WTC11 (cell line): ENCODE measurements at regions of chr1 and their contacts with region 1.

Region 1: DNA sequence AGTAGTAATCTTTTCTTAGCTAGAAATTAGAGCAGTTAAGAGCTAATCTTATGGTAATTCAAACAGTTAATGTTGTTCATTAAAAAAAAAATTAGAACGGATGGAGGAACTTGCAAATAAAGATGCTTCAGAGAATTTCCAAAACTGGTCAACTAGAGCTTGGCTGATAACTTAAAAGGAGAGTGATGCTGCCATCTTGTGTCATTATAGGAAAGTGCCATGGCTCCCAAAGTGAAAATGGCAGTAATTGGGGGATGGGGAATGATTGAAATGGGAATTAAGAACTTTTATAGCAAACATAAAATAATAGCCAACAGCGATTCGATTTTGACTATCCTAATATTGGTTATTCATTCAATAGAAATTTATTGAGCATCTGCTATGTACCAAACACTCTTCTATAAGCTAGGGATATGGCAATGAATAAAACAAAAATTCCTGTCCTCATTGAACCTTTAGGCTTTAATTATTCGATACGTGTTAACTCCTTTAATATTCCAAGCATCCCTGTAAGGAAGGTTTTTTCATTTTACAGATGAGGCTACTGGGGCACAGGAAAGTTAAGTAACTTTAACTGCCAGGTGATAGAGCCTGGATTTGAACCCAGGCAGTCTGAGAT is 5.7 kb upstream of the PLPP3 start:
- DNase-seq: no peak
- ATAC-seq: peak; percentile 35; the same call in 1 of the 2 replicates
- H3K4me3 Mint-ChIP-seq: no peak overlapping the region
- H3K27ac Mint-ChIP-seq: no peak overlapping the region
- H3K4me1 Mint-ChIP-seq: peaks cover 30% of the 10 kb centered on the region
- H3K27me3 Mint-ChIP-seq: no peaks in the 10 kb centered on the region
- CTCF ChIP-seq: peak; percentile 55

Region 2: GRCh38 chr1:55478742-55479141 is 1106.3 kb before region 1 on chr1:
- CTCF ChIA-PET with region 1: interaction called, 12 read pairs
- POLR2A ChIA-PET with region 1: no interaction called
- DNase-seq: no peak
- ATAC-seq: no peak; the same call in 1 of the 2 replicates
- H3K4me3 Mint-ChIP-seq: no peak overlapping the region
- H3K27ac Mint-ChIP-seq: no peak overlapping the region
- H3K4me1 Mint-ChIP-seq: no peaks in the 10 kb centered on the region
- H3K27me3 Mint-ChIP-seq: no peaks in the 10 kb centered on the region; the same call in 1 of the 2 replicates
- CTCF ChIP-seq: no peak

Region 3: GRCh38 chr1:55860798-55861519 is 724.1 kb before region 1 on chr1:
- CTCF ChIA-PET with region 1: interaction called, 15 read pairs
- POLR2A ChIA-PET with region 1: no interaction called
- DNase-seq: peak; percentile 25
- ATAC-seq: peak; percentile 36
- H3K4me3 Mint-ChIP-seq: no peak overlapping the region
- H3K27ac Mint-ChIP-seq: no peak overlapping the region
- H3K4me1 Mint-ChIP-seq: peaks cover 8% of the 10 kb centered on the region
- H3K27me3 Mint-ChIP-seq: no peaks in the 10 kb centered on the region
- CTCF ChIP-seq: no peak

Region 4: GRCh38 chr1:56189946-56190792 is 394.9 kb before region 1 on chr1:
- CTCF ChIA-PET with region 1: interaction called, 13 read pairs
- POLR2A ChIA-PET with region 1: no interaction called
- DNase-seq: peak; percentile 39
- ATAC-seq: peak; percentile 83
- H3K4me3 Mint-ChIP-seq: no peak overlapping the region
- H3K27ac Mint-ChIP-seq: no peak overlapping the region
- H3K4me1 Mint-ChIP-seq: peaks cover 40% of the 10 kb centered on the region
- H3K27me3 Mint-ChIP-seq: no peaks in the 10 kb centered on the region
- CTCF ChIP-seq: peak; percentile 29; the same call in 1 of the 2 replicates